A549 (cell line): ENCODE measurements at regions of chr15 and their contacts with region 1.

Region 1: GRCh38 chr15:77959432-77959879 is 118.1 kb downstream of the TBC1D2B start:
- DNase-seq: peak; percentile 76 to 96
- ATAC-seq: peak; percentile 95 to 100
- H3K4me3 ChIP-seq: peak overlapping the region; percentile 20; the same call in 2 of the 3 replicates
- H3K27ac ChIP-seq: peak overlapping the region in 1 of 2 experiments; percentile 67; a peak in 3 of 6 replicates
- H3K4me1 ChIP-seq: no peaks in the 10 kb centered on the region
- CTCF ChIP-seq: peak; percentile 95
- EP300 ChIP-seq: no peak
- POLR2A ChIP-seq: no peak
- RAD21 ChIP-seq: peak; percentile 97 to 98

Region 2: DNA sequence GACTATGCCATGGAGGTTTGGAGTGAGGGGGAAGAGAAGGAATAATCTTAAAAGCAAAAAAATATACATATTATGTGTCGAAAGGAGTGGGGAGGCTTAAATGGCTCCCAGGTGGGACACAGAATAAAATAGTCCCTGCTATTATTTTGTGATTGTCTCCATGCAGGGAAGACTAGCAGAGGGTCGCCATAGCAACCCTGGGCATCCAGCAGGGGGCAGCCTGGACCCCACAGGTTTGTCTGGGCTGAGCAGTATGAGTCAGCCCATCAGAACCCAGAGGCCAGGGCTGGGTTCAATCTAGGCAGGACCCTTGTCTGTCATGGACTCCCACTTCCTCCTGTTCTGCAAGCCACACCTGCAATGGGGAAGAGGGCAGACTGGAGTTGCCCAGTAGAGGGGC is 309.2 kb before region 1 on chr15:
- CTCF ChIA-PET with region 1: no interaction called
- POLR2A ChIA-PET with region 1: no interaction called
- DNase-seq: peak; percentile 41 to 46
- ATAC-seq: peak; percentile 41 to 79; a peak in 3 of 6 replicates
- H3K4me3 ChIP-seq: no peak overlapping the region
- H3K27ac ChIP-seq: no peak overlapping the region
- H3K4me1 ChIP-seq: no peaks in the 10 kb centered on the region
- CTCF ChIP-seq: peak; percentile 44
- EP300 ChIP-seq: no peak
- POLR2A ChIP-seq: no peak
- RAD21 ChIP-seq: peak; percentile 21 to 22; a peak in 1 of 5 replicates

Region 3: GRCh38 chr15:77992356-77993222 is 33.1 kb after region 1 on chr15:
- CTCF ChIA-PET with region 1: interaction called, 76 read pairs
- POLR2A ChIA-PET with region 1: no interaction called
- DNase-seq: no peak
- ATAC-seq: no peak
- H3K4me3 ChIP-seq: no peak overlapping the region
- H3K27ac ChIP-seq: peak overlapping the region in 1 of 2 experiments; percentile 89; a peak in 3 of 6 replicates
- H3K4me1 ChIP-seq: peaks cover 43% of the 10 kb centered on the region
- CTCF ChIP-seq: no peak
- EP300 ChIP-seq: no peak
- POLR2A ChIP-seq: no peak
- RAD21 ChIP-seq: no peak

Region 4: GRCh38 chr15:78042456-78042855 is 83.0 kb after region 1 on chr15:
- CTCF ChIA-PET with region 1: interaction called, 12 read pairs
- POLR2A ChIA-PET with region 1: no interaction called
- DNase-seq: no peak
- ATAC-seq: no peak
- H3K4me3 ChIP-seq: no peak overlapping the region
- H3K27ac ChIP-seq: no peak overlapping the region
- H3K4me1 ChIP-seq: no peaks in the 10 kb centered on the region; the same call in 2 of the 3 replicates
- CTCF ChIP-seq: no peak
- EP300 ChIP-seq: no peak
- POLR2A ChIP-seq: no peak
- RAD21 ChIP-seq: no peak

Region 5: DNA sequence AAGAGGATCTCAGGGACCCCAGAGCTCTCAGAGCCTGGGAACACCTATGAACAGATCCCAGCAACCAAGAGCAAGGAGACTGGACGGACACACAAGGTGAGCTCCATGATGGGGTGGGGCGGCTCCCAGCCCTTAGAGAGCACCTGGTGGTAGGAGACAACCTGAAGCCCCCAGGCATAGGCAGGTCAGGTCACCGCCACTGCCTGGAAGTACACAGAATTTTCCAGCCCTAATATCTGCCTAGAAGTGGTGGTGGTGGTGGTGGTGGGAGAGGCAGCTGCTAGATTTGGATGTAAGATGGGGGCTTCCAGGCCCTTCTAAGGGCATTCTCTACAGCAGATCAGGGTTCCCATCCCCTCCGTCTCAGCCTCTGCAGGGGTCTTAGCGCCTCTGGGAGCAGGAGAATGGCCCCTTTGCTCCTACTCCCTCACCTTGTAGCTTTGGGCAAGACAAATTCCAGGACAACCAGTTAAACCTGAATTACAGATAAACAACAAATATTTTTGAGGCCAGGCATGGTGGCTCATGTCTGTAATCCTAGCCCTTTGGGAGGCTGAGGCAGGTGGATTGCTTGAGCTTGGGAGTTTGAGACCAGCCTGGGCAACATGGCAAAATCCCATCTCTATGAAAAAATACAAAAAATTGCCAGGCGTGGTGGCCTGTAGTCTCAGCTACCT is 142.1 kb after region 1 on chr15:
- CTCF ChIA-PET with region 1: interaction called, 246 read pairs
- POLR2A ChIA-PET with region 1: no interaction called
- DNase-seq: no peak
- ATAC-seq: no peak; a peak in 1 of 6 replicates
- H3K4me3 ChIP-seq: no peak overlapping the region
- H3K27ac ChIP-seq: no peak overlapping the region
- H3K4me1 ChIP-seq: no peaks in the 10 kb centered on the region
- CTCF ChIP-seq: no peak
- EP300 ChIP-seq: no peak
- POLR2A ChIP-seq: no peak
- RAD21 ChIP-seq: no peak

Region 6: GRCh38 chr15:78195735-78196201 is 236.3 kb after region 1 on chr15:
- CTCF ChIA-PET with region 1: interaction called, 17 read pairs
- POLR2A ChIA-PET with region 1: no interaction called
- DNase-seq: peak; percentile 57 to 78
- ATAC-seq: peak; percentile 92 to 96
- H3K4me3 ChIP-seq: no peak overlapping the region
- H3K27ac ChIP-seq: no peak overlapping the region
- H3K4me1 ChIP-seq: no peaks in the 10 kb centered on the region
- CTCF ChIP-seq: peak; percentile 89
- EP300 ChIP-seq: no peak
- POLR2A ChIP-seq: no peak
- RAD21 ChIP-seq: peak; percentile 83 to 87